Caco-2 (cell line): ENCODE measurements at regions of chr10 and their contacts with region 1.

Region 1: GRCh38 chr10:122310311-122311050 is 39.4 kb downstream of the BTBD16 start:
- DNase-seq: peak; percentile 91 to 96
- H3K4me3 ChIP-seq: peak overlapping the region; percentile 14; the same call in 1 of the 2 replicates
- H3K4me3 Mint-ChIP-seq: peak overlapping the region; percentile 60
- H3K27ac Mint-ChIP-seq: peak overlapping the region; percentile 76
- H3K4me1 ChIP-seq: peaks cover 47% of the 10 kb centered on the region
- H3K4me1 Mint-ChIP-seq: peaks cover 26% of the 10 kb centered on the region
- H3K27me3 ChIP-seq: no peaks in the 10 kb centered on the region; the same call in 1 of the 2 replicates
- H3K27me3 Mint-ChIP-seq: no peaks in the 10 kb centered on the region
- CTCF ChIP-seq: peak; percentile 38 to 53

Region 2: DNA sequence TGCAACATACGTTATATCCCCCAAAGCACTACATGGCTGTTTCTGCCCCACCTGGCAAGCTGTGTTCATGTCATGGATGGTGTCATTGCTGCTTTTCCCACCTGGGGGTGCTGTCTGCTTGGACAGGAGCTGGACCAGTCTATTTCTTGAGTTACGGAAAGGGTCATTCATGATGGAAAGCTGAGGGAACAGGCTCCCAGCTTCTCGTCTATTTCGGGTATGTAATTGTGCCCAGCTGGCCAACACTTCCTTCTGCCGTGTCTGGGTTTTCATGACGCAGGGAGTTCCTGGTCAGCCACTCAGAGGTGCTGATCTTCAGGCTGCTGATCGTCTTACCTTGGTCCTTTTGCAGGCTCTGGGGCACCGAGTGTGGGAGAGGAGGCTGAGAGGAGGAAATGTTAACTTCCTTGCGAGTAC is 30.7 kb before region 1 on chr10:
- CTCF ChIA-PET with region 1: interaction called, 11 read pairs
- POLR2A ChIA-PET with region 1: interaction called, 4 read pairs
- intact Hi-C with region 1: no loop called
- DNase-seq: peak; percentile 68 to 69
- H3K4me3 ChIP-seq: no peak overlapping the region
- H3K4me3 Mint-ChIP-seq: no peak overlapping the region
- H3K27ac Mint-ChIP-seq: no peak overlapping the region
- H3K4me1 ChIP-seq: peaks cover 15% of the 10 kb centered on the region
- H3K4me1 Mint-ChIP-seq: no peaks in the 10 kb centered on the region
- H3K27me3 ChIP-seq: no peaks in the 10 kb centered on the region
- H3K27me3 Mint-ChIP-seq: no peaks in the 10 kb centered on the region
- CTCF ChIP-seq: peak; percentile 73 to 78

Region 3: DNA sequence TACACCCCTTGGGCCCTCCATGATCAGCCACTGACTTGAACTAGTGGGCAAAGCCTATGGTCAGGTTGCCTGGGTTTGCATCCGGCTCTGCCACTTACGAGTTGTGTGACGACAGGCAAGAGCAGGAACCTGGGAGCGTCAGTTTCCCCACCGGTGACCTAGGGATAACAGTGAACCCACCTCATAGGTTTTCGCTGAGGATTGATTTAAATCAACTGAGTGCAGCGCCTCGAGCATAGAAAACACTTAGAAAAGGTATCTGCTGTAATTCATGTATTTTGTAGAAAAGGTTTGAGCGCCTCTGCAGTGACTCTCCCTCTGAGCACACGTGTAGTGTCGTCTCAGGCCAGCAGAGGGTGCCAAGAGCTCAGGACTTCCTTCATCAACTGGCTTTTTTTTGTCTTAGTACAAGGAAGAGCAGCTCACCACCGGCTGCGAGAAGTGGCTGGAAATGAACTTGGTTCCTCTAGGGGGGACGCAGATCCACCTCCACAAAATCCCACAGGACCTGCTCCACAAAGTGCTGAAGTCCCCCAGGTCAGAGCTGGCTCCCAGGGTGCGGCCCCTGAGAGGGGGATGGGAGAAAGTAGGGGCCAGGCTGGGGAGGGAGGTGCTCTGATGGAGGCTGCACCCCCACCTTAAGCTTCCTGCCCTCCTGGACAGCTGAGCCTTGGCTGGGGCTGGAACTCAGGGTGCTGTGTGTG is 11.7 kb before region 1 on chr10:
- CTCF ChIA-PET with region 1: interaction called, 56 read pairs
- POLR2A ChIA-PET with region 1: no interaction called
- intact Hi-C with region 1: loop called (anchors 1 kb)
- DNase-seq: peak; percentile 70 to 75
- H3K4me3 ChIP-seq: 0 out of 2 replicates have a peak overlapping the region, but pooled peaks have one; percentile 18
- H3K4me3 Mint-ChIP-seq: no peak overlapping the region
- H3K27ac Mint-ChIP-seq: no peak overlapping the region
- H3K4me1 ChIP-seq: peaks cover 15% of the 10 kb centered on the region
- H3K4me1 Mint-ChIP-seq: peaks cover 11% of the 10 kb centered on the region
- H3K27me3 ChIP-seq: no peaks in the 10 kb centered on the region
- H3K27me3 Mint-ChIP-seq: no peaks in the 10 kb centered on the region
- CTCF ChIP-seq: peak; percentile 92 to 96

Region 4: DNA sequence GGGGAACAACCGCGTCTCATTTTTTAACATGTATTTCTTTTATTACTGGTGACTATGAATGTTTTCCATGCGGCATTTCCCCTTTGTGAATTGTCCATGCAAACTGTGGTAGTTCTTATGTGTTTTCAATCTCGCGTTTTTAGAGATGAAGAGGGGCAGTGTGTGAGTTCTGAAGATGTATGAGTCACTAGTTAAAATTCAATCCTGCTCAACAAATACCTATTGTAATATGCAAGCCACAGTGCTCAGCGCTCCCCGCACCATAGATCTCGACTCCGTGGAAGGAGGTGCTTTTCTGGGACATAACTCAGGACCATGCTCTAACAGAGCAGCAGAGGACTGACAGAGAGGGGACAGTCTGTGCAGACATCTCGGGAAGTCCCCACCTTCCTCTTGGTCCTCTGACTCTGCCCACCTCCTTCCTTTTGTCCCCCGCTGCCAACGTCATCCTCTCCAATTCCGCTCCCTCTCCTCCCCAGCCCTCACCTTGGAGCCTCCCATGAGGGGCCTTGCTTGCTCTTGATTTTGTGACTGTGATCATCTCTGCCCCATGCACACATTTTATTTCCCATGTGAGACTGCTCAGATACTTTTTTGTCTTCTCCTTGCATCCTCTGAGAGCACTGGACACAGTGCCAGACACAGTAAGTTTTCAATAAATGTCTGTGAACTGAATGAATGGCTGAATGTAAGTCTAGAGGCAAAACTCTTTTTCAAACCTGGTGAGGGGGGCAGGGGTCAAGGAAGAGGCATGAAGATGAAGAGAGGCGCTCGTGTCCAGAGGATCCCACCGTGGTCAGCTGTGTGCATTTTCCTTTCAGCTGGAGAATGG is 21.4 kb after region 1 on chr10:
- CTCF ChIA-PET with region 1: interaction called, 3 read pairs
- POLR2A ChIA-PET with region 1: no interaction called
- intact Hi-C with region 1: loop called (anchors 2 kb)
- DNase-seq: no peak
- H3K4me3 ChIP-seq: no peak overlapping the region
- H3K4me3 Mint-ChIP-seq: peak overlapping the region; percentile 56
- H3K27ac Mint-ChIP-seq: peak overlapping the region; percentile 27
- H3K4me1 ChIP-seq: peaks cover 15% of the 10 kb centered on the region; the same call in 1 of the 2 replicates
- H3K4me1 Mint-ChIP-seq: peaks cover 16% of the 10 kb centered on the region
- H3K27me3 ChIP-seq: no peaks in the 10 kb centered on the region
- H3K27me3 Mint-ChIP-seq: no peaks in the 10 kb centered on the region
- CTCF ChIP-seq: no peak

Region 5: GRCh38 chr10:122342293-122343134 is 32.0 kb after region 1 on chr10:
- CTCF ChIA-PET with region 1: interaction called, 10 read pairs
- POLR2A ChIA-PET with region 1: no interaction called
- intact Hi-C with region 1: no loop called
- DNase-seq: peak in 1 of 2 experiments; percentile 76
- H3K4me3 ChIP-seq: no peak overlapping the region
- H3K4me3 Mint-ChIP-seq: no peak overlapping the region
- H3K27ac Mint-ChIP-seq: no peak overlapping the region
- H3K4me1 ChIP-seq: peaks cover 4% of the 10 kb centered on the region; the same call in 1 of the 2 replicates
- H3K4me1 Mint-ChIP-seq: peaks cover 17% of the 10 kb centered on the region
- H3K27me3 ChIP-seq: no peaks in the 10 kb centered on the region
- H3K27me3 Mint-ChIP-seq: no peaks in the 10 kb centered on the region
- CTCF ChIP-seq: peak; percentile 72 to 81

Region 6: GRCh38 chr10:122374237-122374869 is 63.9 kb after region 1 on chr10 and contains the start of gene PLEKHA1:
- CTCF ChIA-PET with region 1: interaction called, 12 read pairs
- POLR2A ChIA-PET with region 1: interaction called, 36 read pairs
- intact Hi-C with region 1: loop called (anchors 1 kb)
- DNase-seq: peak; percentile 94 to 97
- H3K4me3 ChIP-seq: peak within 1 kb of the TSS; percentile 83
- H3K4me3 Mint-ChIP-seq: peak within 1 kb of the TSS; percentile 91
- H3K27ac Mint-ChIP-seq: peak within 1 kb of the TSS; percentile 89
- H3K4me1 ChIP-seq: peaks cover 23% of the 10 kb centered on the region
- H3K4me1 Mint-ChIP-seq: peaks cover 21% of the 10 kb centered on the region
- H3K27me3 ChIP-seq: no peaks in the 10 kb centered on the region
- H3K27me3 Mint-ChIP-seq: no peaks in the 10 kb centered on the region
- CTCF ChIP-seq: peak in 1 of 2 experiments; percentile 20
- total RNA-seq, gene PLEKHA1: 48.4 and 48.5 TPM in 2 replicates